Aorta (tissue), 5 donors: ENCODE measurements at regions of chr17 and their contacts with region 1.

Region 1: GRCh38 chr17:67993596-67994361 is 2.5 kb downstream of the C17orf58 start:
- DNase-seq: peak in 1 of 2 donors; percentile 94
- ATAC-seq: peak; percentile 89
- H3K4me3 ChIP-seq: peak overlapping the region; percentile 64 to 65
- H3K27ac ChIP-seq: peak overlapping the region; percentile 3 to 97
- H3K4me1 ChIP-seq: no peaks in the 10 kb centered on the region
- H3K27me3 ChIP-seq: no peaks in the 10 kb centered on the region

Region 2: GRCh38 chr17:67902511-67903231 is 91.1 kb before region 1 on chr17:
- intact Hi-C with region 1: no loop called
- DNase-seq: no peak
- ATAC-seq: no peak
- H3K4me3 ChIP-seq: no peak overlapping the region
- H3K27ac ChIP-seq: no peak overlapping the region
- H3K4me1 ChIP-seq: no peaks in the 10 kb centered on the region
- H3K27me3 ChIP-seq: no peaks in the 10 kb centered on the region

Region 3: GRCh38 chr17:67944035-67944434 is 49.7 kb before region 1 on chr17:
- intact Hi-C with region 1: no loop called
- DNase-seq: no peak
- ATAC-seq: no peak
- H3K4me3 ChIP-seq: no peak overlapping the region
- H3K27ac ChIP-seq: no peak overlapping the region
- H3K4me1 ChIP-seq: no peaks in the 10 kb centered on the region
- H3K27me3 ChIP-seq: no peaks in the 10 kb centered on the region

Region 4: DNA sequence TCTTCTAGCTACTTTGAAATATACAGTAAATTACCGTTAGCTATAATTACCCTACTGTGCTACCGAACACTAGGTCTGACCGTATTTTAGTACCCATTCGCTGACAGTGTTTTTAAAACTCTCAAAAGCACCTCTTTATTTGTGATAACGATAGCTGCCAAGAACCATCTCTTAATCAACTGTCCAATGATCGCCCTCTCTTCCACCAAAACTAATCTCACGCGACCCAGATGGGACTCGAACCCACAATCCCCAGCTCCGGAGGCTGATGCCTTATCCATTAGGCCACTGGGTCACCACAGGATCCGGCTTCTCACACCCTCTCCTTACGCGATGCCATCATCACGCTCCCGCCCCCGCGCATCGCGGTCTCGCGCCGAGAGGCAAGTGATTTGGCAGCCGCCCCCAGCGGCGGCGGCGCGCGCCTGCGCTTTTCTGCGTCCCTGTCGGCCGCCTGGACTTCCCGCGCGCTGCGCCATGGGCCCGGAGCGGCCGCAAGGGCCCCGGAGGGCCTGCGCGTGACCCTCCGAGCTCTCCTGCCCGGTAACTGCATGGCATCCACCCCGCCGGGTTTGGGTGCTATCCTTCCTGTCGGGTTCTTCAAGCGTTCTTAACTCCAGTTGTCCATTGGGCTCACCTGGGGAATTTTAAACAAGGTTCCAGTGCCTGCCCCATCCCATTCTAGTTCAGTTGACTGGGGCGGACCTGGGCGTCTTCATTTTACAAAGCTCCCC is 26.1 kb after region 1 on chr17:
- intact Hi-C with region 1: loop called in 1 of 2 experiments (anchors 2 kb)
- DNase-seq: peak; percentile 96 to 99
- ATAC-seq: peak; percentile 98
- H3K4me3 ChIP-seq: peak overlapping the region; percentile 59 to 68
- H3K27ac ChIP-seq: peak overlapping the region in 1 of 2 donors; percentile 30
- H3K4me1 ChIP-seq: no peaks in the 10 kb centered on the region
- H3K27me3 ChIP-seq: no peaks in the 10 kb centered on the region